ENCODE measurements at regions of chr18 and their contacts with region 1.

Region 1: DNA sequence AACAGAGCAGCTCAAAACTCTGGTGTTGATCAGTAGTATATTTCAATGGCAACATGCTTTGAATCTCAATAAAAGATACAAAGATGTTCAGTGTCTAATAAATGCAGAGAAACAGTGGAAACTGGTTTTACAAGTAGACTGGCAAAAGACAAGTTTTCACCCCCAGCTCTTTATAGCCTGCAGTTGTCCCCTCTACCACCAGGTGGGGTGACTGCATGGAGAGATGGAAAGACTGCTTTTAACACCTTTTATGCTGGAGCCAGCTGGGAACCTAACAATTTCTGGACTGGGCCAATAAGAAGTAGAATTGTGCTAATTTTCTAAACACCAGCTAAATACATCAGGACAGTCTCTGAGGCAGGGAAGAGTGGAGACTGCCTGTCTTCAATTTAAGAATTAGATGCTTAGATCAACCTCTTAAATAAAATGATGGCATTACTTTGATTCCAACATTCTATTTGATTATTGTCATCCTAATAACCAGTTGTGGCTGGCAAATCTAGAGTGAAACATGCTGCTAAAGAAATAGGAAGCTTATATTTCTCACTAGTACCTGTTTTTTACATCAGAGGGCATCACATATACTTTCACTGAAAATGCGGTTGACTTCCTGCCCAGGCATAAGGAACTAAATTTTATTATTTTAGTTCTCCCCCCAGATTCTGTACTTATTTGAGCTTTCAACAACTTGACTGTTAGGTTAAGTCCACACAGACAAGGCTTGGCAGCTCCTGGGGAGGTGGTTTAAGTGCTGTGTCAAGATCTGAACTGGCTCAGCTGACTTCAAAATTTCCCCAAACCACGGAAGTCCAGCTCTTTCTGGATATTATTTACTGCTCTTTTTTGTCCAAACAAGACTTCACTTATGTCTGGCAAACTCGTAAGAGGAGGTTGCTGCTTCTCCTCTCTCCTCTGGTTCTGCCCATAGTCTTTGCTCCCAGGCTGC is 140.5 kb downstream of the TPGS2 start:
- DNase-seq: peak; percentile 44
- H3K4me3 ChIP-seq: no peak overlapping the region
- H3K27ac ChIP-seq: no peak overlapping the region
- H3K27me3 ChIP-seq: no peaks in the 10 kb centered on the region
- CTCF ChIP-seq: peak; percentile 98

Region 2: DNA sequence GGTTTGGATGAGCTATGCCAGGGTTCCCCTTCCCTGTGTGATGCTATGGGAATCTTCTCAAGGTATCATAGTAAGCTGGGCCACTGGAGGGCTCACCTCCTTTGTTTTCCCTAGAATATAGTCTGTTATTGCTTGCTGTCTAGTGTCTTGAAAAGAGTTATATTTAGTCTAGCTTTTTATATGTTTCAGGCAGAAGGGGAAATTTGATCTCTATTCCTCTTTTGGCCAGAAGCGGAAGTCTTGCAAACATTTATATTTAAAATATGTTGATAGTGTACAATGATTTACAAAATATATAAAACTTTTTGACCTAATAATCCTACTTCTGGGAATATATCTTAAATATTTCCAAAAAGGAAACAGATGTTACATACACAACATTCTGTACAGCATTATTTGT is 130.1 kb before region 1 on chr18:
- CTCF ChIA-PET with region 1: interaction called, 19 read pairs
- POLR2A ChIA-PET with region 1: no interaction called
- DNase-seq: no peak
- H3K4me3 ChIP-seq: no peak overlapping the region
- H3K27ac ChIP-seq: peak overlapping the region; percentile 25
- H3K27me3 ChIP-seq: no peaks in the 10 kb centered on the region
- CTCF ChIP-seq: peak; percentile 26; the same call in 1 of the 2 replicates

Region 3: GRCh38 chr18:36672437-36673344 is 15.6 kb before region 1 on chr18:
- CTCF ChIA-PET with region 1: interaction called, 61 read pairs
- POLR2A ChIA-PET with region 1: no interaction called
- DNase-seq: no peak
- H3K4me3 ChIP-seq: peak overlapping the region; percentile 40
- H3K27ac ChIP-seq: peak overlapping the region; percentile 55
- H3K27me3 ChIP-seq: no peaks in the 10 kb centered on the region
- CTCF ChIP-seq: no peak

Region 4: DNA sequence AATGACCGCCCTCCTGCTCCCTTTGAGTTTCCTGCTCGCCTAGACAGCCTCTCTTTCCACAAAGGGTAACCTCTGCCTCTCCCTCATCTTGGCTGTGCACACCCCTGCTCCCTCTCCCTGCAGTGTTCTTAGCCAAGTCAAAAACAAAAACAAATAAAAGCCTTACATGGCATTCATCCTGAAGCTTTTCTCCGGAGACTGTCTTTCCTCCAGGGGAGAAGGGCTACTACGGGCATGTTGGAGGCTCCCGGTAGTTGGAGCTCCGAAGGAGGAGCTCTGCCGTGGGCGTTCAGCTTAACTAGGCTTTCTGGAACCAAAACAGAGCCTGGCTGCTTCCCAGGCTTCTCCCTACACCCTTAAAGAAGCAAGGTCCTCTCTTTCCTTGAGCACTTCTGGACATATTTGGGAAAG is 36.3 kb after region 1 on chr18:
- CTCF ChIA-PET with region 1: interaction called, 13 read pairs
- POLR2A ChIA-PET with region 1: no interaction called
- DNase-seq: no peak
- H3K4me3 ChIP-seq: 0 out of 2 replicates have a peak overlapping the region, but pooled peaks have one; percentile 20
- H3K27ac ChIP-seq: peak overlapping the region; percentile 52
- H3K27me3 ChIP-seq: no peaks in the 10 kb centered on the region
- CTCF ChIP-seq: no peak

Region 5: GRCh38 chr18:36757081-36757480 is 68.8 kb after region 1 on chr18:
- CTCF ChIA-PET with region 1: interaction called, 62 read pairs
- POLR2A ChIA-PET with region 1: no interaction called
- DNase-seq: peak; percentile 44
- H3K4me3 ChIP-seq: no peak overlapping the region
- H3K27ac ChIP-seq: no peak overlapping the region
- H3K27me3 ChIP-seq: no peaks in the 10 kb centered on the region
- CTCF ChIP-seq: peak; percentile 75

Measured in AG04450 (cell line).